SK-N-SH (cell line): ENCODE measurements at regions of chr12 and their contacts with region 1.

Region 1: DNA sequence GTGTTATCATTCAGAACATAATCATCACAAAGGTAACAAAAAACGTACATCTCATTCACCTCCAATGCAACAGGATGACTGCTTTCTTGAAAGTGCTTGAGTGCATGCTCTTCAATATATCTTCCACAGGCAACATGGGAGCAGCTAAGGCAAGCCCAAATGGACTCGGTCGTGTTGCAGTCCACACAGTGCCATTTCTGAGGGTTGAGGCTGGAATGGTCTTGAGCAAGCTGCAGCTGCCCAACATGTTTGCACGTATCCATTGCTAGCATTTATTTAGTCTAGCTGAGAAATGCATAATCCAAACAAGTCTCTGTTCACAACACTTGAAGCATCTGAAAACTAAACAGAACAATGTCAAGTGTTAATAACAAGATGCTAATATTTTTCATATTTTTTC is 17.3 kb downstream of the USP44 start:
- DNase-seq: no peak
- H3K4me3 ChIP-seq: no peak overlapping the region
- H3K27ac ChIP-seq: no peak overlapping the region
- H3K4me1 ChIP-seq: no peaks in the 10 kb centered on the region; a peak in 1 of 4 replicates
- H3K27me3 ChIP-seq: no peaks in the 10 kb centered on the region
- CTCF ChIP-seq: no peak
- EP300 ChIP-seq: no peak
- RAD21 ChIP-seq: no peak

Region 2: DNA sequence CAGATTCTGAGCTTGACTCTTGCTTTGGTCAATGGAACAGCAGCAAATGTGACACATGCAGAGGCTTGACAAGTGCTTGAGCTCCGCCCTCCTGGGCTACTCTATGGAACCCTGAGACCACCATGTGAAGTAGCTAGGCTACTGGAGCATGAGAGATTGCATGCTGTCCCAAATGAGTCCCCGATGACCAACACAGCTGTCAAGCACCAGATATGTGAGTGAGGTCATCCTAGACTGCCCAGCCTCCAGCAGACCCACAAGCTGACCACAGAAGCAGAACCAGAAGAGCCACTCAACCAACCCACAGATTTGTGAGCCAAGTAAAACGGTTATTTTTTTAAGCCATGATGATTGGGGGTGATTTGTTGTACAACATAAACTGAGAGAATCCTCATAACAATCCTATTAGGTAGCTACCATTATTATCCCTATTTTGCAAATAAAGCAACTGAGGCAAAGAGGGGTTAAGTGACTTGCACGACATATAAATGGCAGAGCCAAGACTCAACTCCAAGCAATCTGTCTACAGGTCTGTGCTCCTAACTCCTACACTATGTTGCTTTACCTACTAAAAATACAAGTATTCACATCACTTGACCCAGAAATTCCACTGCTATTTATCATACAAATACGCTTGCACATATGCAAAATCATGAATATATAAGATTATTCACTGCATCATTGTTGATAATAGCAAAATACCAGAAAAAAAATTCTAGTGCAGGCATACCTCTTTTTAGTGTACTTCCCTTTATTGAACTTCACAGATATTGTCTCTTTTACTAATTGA is 666.7 kb before region 1 on chr12:
- CTCF ChIA-PET with region 1: no interaction called
- POLR2A ChIA-PET with region 1: no interaction called
- DNase-seq: no peak
- H3K4me3 ChIP-seq: no peak overlapping the region
- H3K27ac ChIP-seq: no peak overlapping the region
- H3K4me1 ChIP-seq: no peaks in the 10 kb centered on the region
- H3K27me3 ChIP-seq: peaks cover 11% of the 10 kb centered on the region; the same call in 1 of the 2 replicates
- CTCF ChIP-seq: no peak
- EP300 ChIP-seq: no peak
- RAD21 ChIP-seq: no peak

Region 3: GRCh38 chr12:95343461-95344230 is 190.3 kb before region 1 on chr12:
- CTCF ChIA-PET with region 1: interaction called, 12 read pairs
- POLR2A ChIA-PET with region 1: no interaction called
- DNase-seq: no peak
- H3K4me3 ChIP-seq: no peak overlapping the region
- H3K27ac ChIP-seq: no peak overlapping the region
- H3K4me1 ChIP-seq: no peaks in the 10 kb centered on the region
- H3K27me3 ChIP-seq: no peaks in the 10 kb centered on the region
- CTCF ChIP-seq: no peak
- EP300 ChIP-seq: no peak
- RAD21 ChIP-seq: no peak

Region 4: DNA sequence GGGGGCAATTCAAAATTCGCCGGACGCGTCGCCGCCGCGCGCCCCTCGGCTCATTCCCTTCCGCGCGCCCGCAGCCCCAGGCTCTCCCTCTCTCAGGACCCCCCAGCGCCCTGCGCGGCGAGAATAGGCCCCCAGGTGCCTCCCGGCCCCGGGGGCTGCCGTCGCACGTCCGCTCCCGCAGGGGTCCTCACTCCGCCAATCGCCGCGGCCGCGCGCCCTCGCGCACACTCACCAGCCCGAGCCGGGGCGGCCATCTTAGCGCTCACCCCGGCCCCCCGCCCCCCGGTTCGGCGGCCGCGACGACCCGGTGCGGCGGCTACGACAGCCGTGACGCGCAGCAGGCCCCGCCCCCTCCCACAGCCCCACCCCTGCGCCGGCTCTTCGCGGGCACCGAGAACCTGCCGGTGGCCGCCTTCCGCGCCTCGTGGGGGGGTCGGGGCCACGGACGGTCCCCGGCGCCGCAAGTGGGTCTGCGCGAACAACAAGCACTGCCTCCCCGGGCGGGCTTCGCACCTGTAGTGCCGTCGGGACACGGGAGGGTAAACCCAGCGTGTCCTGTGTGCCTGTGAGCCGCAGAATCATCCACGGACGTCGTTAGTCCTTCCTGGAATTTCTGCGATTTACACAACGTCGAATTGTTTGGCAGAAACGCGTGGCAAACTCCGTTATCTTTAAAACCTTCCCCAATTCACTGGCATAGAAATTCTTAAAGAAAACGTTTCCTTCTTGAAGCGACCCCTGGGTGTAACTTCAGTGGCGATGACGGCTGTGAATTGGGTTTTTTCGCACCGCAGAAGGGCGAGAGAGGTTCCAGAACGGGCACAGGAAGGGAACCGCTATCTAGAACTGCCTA is 14.8 kb after region 1 on chr12:
- CTCF ChIA-PET with region 1: interaction called, 14 read pairs
- POLR2A ChIA-PET with region 1: interaction called, 3 read pairs
- DNase-seq: peak; percentile 98
- H3K4me3 ChIP-seq: peak overlapping the region; percentile 65 to 69
- H3K27ac ChIP-seq: peak overlapping the region in 1 of 2 experiments; percentile 62; a peak in 1 of 4 replicates
- H3K4me1 ChIP-seq: no peaks in the 10 kb centered on the region; a peak in 1 of 4 replicates
- H3K27me3 ChIP-seq: 0 out of 2 replicates have a peak, but pooled peaks cover 5% of the 10 kb centered on the region
- CTCF ChIP-seq: no peak
- EP300 ChIP-seq: no peak
- RAD21 ChIP-seq: no peak